ENCODE measurements at regions of chr2 and their contacts with region 1.

Region 1: DNA sequence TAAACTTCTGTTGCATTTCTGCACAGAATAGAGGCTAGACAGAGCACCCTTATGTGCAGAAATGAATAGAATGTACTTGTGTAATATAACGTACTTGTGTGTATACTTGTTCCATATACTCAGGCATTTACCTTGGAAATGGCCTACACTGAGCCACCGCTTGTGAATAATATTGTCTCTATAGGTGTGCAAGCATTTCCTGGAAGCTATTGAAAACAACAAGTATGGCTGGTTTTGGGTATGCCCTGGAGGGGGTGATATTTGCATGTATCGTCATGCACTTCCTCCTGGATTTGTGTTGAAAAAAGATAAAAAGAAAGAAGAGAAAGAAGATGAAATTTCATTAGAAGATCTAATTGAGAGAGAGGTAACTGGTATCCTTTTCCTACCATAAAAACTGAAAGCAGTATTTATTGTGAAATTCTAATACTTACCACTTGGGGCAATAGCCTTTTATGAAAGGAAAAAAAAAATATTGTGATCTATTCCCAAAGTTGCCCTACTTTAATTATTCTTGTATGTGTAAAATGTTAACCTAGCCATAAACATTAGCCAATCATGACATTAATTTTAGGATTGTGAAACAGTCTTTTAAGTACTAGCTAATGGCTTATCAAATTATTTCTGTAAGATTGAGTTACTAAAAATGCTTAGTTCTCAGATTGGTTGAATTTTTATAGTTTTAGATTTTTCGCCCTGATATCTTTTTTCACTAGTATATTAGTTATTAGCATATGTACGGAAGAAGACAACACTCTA is 18.0 kb downstream of the ZC3H15 start:
- DNase-seq: peak; percentile 39
- H3K4me3 ChIP-seq: no peak overlapping the region
- H3K27ac ChIP-seq: no peak overlapping the region
- H3K4me1 ChIP-seq: no peaks in the 10 kb centered on the region
- CTCF ChIP-seq: peak; percentile 82

Region 2: GRCh38 chr2:186269536-186269935 is 234.5 kb before region 1 on chr2:
- CTCF ChIA-PET with region 1: no interaction called
- POLR2A ChIA-PET with region 1: no interaction called
- intact Hi-C with region 1: no loop called
- DNase-seq: no peak
- H3K4me3 ChIP-seq: no peak overlapping the region
- H3K27ac ChIP-seq: no peak overlapping the region
- H3K4me1 ChIP-seq: no peaks in the 10 kb centered on the region
- CTCF ChIP-seq: no peak

Region 3: DNA sequence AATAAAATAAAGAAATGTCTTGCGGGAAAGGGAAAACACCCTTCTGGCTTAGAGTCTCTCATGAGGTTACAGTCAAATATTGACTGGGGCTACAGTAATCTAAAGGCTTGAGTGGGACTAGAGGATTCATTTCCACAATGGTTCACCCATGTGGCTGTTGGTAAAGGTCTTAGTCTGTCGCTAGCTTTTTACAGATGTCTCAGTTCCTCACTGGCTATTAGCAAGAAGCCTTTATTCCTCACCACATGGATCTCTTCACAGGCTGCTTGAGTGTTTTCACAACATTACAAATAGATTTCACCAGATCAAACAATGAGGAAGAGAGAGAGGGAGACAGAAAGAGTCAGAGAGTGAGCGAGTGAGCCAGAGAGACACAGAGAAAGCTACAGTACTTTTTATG is 26.2 kb before region 1 on chr2:
- CTCF ChIA-PET with region 1: no interaction called
- POLR2A ChIA-PET with region 1: no interaction called
- intact Hi-C with region 1: no loop called
- DNase-seq: no peak
- H3K4me3 ChIP-seq: no peak overlapping the region
- H3K27ac ChIP-seq: no peak overlapping the region
- H3K4me1 ChIP-seq: no peaks in the 10 kb centered on the region
- CTCF ChIP-seq: no peak

Region 4: DNA sequence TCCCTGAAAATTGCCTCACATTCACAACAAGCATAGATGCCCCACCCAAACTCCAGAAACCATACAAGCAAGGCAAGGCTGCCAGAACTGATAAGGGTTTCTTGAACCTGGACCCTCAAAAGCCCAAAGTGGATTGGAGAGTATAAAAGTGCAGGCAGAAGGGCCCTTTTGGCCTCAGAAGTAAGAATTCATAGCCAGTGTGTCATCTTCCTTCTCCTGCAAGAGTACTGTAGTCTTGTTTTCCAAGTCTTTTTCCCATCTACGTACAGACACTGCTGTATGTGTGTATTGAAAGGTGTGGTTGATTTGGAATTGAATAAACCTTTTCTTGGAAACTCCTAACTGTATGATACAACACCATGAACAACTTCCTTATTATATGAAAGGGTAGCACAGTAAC is 28.9 kb after region 1 on chr2:
- CTCF ChIA-PET with region 1: no interaction called
- POLR2A ChIA-PET with region 1: no interaction called
- intact Hi-C with region 1: no loop called
- DNase-seq: no peak
- H3K4me3 ChIP-seq: no peak overlapping the region
- H3K27ac ChIP-seq: no peak overlapping the region
- H3K4me1 ChIP-seq: no peaks in the 10 kb centered on the region
- CTCF ChIP-seq: no peak

Region 5: DNA sequence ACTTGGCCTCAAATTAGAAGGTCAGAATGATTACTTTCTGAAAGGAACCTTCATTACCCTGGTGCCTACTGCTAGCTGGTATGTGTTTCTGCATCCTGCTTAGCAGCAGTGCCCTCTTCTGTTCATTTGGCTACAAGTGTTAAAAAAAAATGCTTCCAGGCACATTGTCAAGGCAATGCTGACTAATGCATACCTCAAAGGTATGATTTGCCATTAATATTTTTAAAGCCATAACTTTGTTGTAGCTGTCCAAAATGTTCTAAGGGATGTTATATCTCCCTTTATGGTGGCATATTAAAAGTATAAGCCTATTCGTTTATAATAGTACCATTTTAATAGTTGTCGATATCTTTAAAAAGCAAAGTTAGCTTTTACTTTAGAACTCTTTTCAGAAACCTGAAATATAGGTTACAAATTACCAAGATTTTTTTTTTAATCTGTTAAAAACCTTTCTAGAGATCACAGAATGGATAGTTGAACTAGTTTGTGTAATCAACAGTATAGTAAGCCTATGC is 137.8 kb after region 1 on chr2:
- CTCF ChIA-PET with region 1: interaction called, 3 read pairs
- POLR2A ChIA-PET with region 1: interaction called, 3 read pairs
- intact Hi-C with region 1: loop called (anchors 2 kb)
- DNase-seq: peak; percentile 53
- H3K4me3 ChIP-seq: no peak overlapping the region
- H3K27ac ChIP-seq: no peak overlapping the region
- H3K4me1 ChIP-seq: no peaks in the 10 kb centered on the region
- CTCF ChIP-seq: peak; percentile 84

Measured in OCI-LY7 (cell line).